ENCODE measurements at regions of chr21 and their contacts with region 1.

Region 1: DNA sequence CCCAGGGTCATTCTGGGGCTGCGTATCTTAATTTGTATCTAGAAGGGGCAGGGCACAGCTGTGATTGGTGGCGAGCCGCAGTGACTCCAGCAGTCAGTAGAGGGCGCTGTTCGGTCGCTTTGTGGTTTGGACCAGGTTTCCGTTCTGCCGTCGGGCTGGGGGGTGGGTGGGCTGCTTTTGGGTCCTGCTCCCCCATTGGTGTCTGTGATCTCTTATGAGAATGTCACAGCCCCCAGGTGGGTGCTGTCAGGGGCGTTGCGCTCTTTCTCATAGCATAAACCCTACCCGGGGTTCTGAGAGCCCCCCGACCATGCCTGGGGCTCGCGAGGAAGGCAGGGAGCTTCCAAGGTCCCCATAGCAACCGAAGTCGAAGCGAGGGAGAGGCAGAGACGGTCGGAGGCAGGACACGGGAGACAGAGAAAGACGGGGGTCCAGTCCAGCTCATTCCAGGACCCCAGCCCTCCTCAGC is 5.4 kb downstream of the TFF3 start:
- DNase-seq: peak in 1 of 5 donors; percentile 52
- ATAC-seq: peak; percentile 6 to 68 (median 48)
- H3K4me3 ChIP-seq: no peak overlapping the region
- H3K27ac ChIP-seq: no peak overlapping the region
- H3K4me1 ChIP-seq: peaks cover 0 to 30% (median 15%) of the 10 kb centered on the region in 12 donors
- H3K27me3 ChIP-seq: peaks cover 0 to 30% (median 3%) of the 10 kb centered on the region in 9 donors
- CTCF ChIP-seq: peak; percentile 58 to 76 (median 71)
- POLR2A ChIP-seq: no peak

Region 2: GRCh38 chr21:42233067-42233961 is 76.5 kb before region 1 on chr21:
- intact Hi-C with region 1: loop called in 1 of 10 experiments (anchors 10 kb)
- DNase-seq: peak; percentile 66 to 89 (median 83)
- ATAC-seq: peak; percentile 68 to 86 (median 81)
- H3K4me3 ChIP-seq: peak overlapping the region in 7 of 12 donors; percentile 3 to 62 (median 13)
- H3K27ac ChIP-seq: peak overlapping the region; percentile 60 to 91 (median 84)
- H3K4me1 ChIP-seq: peaks cover 27 to 99% (median 86%) of the 10 kb centered on the region in 12 donors
- H3K27me3 ChIP-seq: no peaks in the 10 kb centered on the region
- CTCF ChIP-seq: peak in 9 of 12 donors; percentile 12 to 48 (median 38)
- POLR2A ChIP-seq: no peak

Region 3: DNA sequence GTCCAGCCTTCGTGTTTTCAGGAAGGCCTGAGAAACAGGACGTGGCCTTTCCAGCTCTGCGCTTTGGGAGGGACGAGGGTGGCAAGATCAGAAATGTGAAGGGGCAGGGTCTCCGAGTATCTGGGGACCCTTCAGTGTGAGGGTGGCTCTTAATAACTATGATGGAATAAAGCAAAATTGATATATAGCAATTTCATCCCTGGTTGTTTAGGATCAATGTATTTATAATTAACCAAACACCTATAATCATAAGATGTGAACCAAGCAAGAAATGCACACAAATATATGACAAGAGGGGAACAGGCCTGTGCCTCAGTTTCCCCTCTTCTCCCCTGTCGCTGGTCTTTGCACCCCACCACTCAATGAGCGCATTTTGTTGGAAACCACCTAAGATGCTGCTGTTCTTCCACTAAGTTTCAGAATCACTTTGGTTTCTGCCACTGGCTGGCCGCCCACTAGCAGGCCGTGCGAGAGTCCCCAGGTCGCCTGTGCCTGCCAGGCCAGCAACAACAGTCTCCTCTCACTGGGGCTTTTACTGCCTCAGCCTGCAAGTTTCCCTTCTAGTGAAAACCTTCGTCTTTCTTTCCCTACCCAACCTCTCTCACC is 130.5 kb after region 1 on chr21:
- intact Hi-C with region 1: loop called in 4 of 10 experiments (anchors 5 to 10 kb)
- DNase-seq: no peak
- ATAC-seq: no peak
- H3K4me3 ChIP-seq: no peak overlapping the region
- H3K27ac ChIP-seq: no peak overlapping the region
- H3K4me1 ChIP-seq: no peaks in the 10 kb centered on the region
- H3K27me3 ChIP-seq: peaks cover 0 to 7% (median 0%) of the 10 kb centered on the region in 9 donors
- CTCF ChIP-seq: no peak
- POLR2A ChIP-seq: no peak

Region 4: GRCh38 chr21:42449296-42449927 is 139.6 kb after region 1 on chr21:
- intact Hi-C with region 1: loop called in 5 of 10 experiments (anchors 5 to 10 kb)
- DNase-seq: no peak
- ATAC-seq: peak in 1 of 4 donors; percentile 25
- H3K4me3 ChIP-seq: no peak overlapping the region
- H3K27ac ChIP-seq: no peak overlapping the region
- H3K4me1 ChIP-seq: peaks cover 0 to 6% (median 0%) of the 10 kb centered on the region in 12 donors
- H3K27me3 ChIP-seq: peaks cover 0 to 9% (median 0%) of the 10 kb centered on the region in 9 donors
- CTCF ChIP-seq: no peak
- POLR2A ChIP-seq: no peak

Region 5: GRCh38 chr21:42454786-42455580 is 145.2 kb after region 1 on chr21:
- intact Hi-C with region 1: loop called in 1 of 10 experiments (anchors 5 kb)
- DNase-seq: no peak
- ATAC-seq: no peak
- H3K4me3 ChIP-seq: no peak overlapping the region
- H3K27ac ChIP-seq: no peak overlapping the region
- H3K4me1 ChIP-seq: peaks cover 0 to 6% (median 0%) of the 10 kb centered on the region in 12 donors
- H3K27me3 ChIP-seq: peaks cover 0 to 14% (median 0%) of the 10 kb centered on the region in 9 donors
- CTCF ChIP-seq: no peak
- POLR2A ChIP-seq: no peak